MCF 10A (cell line): ENCODE measurements at regions of chr9 and their contacts with region 1.

Region 1: DNA sequence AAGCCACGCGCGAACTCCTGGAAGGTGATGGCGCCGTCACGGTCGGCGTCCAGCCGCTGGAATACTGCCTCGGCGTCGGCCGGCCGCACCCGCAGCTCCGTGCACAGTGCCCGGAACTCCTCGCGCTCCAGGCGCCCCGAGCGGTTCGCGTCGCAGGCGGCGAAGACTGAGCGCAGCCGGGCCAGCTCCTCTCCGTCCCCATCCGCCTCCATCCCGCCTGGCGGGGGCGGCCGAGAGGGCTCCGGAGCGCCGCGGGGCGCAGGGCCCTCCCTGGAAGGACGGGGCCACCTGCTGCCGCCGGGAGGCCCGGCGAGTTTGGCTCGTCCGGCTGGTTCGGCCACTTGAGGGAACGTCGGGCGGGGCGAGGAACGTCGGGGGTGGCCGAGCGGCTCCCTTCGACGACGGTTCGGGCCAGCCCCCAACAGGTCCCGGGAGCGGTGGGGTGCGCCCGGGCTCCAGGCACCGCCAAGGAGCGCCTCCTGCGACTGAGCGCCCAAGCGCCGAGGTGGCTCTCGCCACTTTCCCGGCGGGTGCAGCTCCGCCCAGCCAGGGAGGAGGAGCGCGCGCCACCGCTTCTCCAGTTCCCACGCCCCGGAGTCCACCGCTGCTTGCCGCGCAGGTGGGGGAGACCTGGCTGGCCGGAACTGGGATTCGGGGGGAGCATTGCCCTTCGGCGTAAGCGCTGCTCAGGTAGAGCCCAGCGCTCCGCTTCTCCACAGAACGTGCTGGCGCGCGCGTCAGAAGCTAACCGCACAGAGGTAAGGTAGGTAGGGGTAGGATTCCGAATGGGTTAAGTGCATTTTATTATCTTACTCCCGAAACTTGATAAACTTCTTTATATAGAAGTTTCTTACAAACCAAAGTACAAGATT is at the start of gene RASEF:
- DNase-seq: peak; percentile 65
- H3K4me3 Mint-ChIP-seq: peak within 1 kb of the TSS; percentile 94
- H3K27ac Mint-ChIP-seq: peak within 1 kb of the TSS; percentile 52
- H3K4me1 Mint-ChIP-seq: peaks cover 47% of the 10 kb centered on the region
- H3K27me3 Mint-ChIP-seq: no peaks in the 10 kb centered on the region
- CTCF ChIP-seq: peak; percentile 29
- total RNA-seq, gene RASEF: 6.9 and 7.5 TPM in 2 replicates

Region 2: DNA sequence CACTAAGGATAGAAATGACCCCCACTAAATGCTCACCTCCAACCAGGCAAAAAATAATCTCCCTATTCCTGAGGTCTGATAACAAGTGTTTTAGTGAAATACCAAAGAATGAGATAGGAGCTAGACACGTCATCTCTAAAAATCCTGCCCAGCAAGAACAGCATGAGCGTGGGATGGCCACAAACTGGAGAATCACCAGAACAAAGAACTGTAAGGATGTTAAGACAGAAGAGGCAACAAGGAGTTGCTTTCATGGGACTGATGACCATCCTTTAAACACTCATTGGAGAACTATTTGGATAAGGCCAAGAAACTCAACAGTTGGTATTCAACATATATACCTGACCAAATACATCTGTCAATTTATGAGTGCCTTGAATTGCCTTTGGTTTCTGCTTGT is 113.7 kb before region 1 on chr9:
- CTCF ChIA-PET with region 1: no interaction called
- POLR2A ChIA-PET with region 1: no interaction called
- intact Hi-C with region 1: no loop called
- DNase-seq: no peak
- H3K4me3 Mint-ChIP-seq: no peak overlapping the region
- H3K27ac Mint-ChIP-seq: no peak overlapping the region
- H3K4me1 Mint-ChIP-seq: no peaks in the 10 kb centered on the region
- H3K27me3 Mint-ChIP-seq: no peaks in the 10 kb centered on the region
- CTCF ChIP-seq: no peak

Region 3: GRCh38 chr9:82961504-82962125 is 101.3 kb before region 1 on chr9:
- CTCF ChIA-PET with region 1: no interaction called
- POLR2A ChIA-PET with region 1: no interaction called
- intact Hi-C with region 1: loop called (anchors 5 kb)
- DNase-seq: peak; percentile 90
- H3K4me3 Mint-ChIP-seq: no peak overlapping the region
- H3K27ac Mint-ChIP-seq: no peak overlapping the region
- H3K4me1 Mint-ChIP-seq: no peaks in the 10 kb centered on the region
- H3K27me3 Mint-ChIP-seq: no peaks in the 10 kb centered on the region
- CTCF ChIP-seq: peak; percentile 74

Region 4: GRCh38 chr9:83027153-83027891 is 35.6 kb before region 1 on chr9:
- CTCF ChIA-PET with region 1: interaction called, 5 read pairs
- POLR2A ChIA-PET with region 1: interaction called, 142 read pairs
- intact Hi-C with region 1: loop called (anchors 2 kb)
- DNase-seq: peak; percentile 84
- H3K4me3 Mint-ChIP-seq: no peak overlapping the region
- H3K27ac Mint-ChIP-seq: peak overlapping the region; percentile 83
- H3K4me1 Mint-ChIP-seq: peaks cover 45% of the 10 kb centered on the region
- H3K27me3 Mint-ChIP-seq: no peaks in the 10 kb centered on the region
- CTCF ChIP-seq: no peak

Region 5: GRCh38 chr9:83154087-83154736 is 91.3 kb after region 1 on chr9:
- CTCF ChIA-PET with region 1: no interaction called
- POLR2A ChIA-PET with region 1: interaction called, 4 read pairs
- intact Hi-C with region 1: loop called (anchors 10 kb)
- DNase-seq: peak; percentile 79
- H3K4me3 Mint-ChIP-seq: no peak overlapping the region
- H3K27ac Mint-ChIP-seq: peak overlapping the region; percentile 93
- H3K4me1 Mint-ChIP-seq: peaks cover 33% of the 10 kb centered on the region
- H3K27me3 Mint-ChIP-seq: no peaks in the 10 kb centered on the region
- CTCF ChIP-seq: no peak

Region 6: DNA sequence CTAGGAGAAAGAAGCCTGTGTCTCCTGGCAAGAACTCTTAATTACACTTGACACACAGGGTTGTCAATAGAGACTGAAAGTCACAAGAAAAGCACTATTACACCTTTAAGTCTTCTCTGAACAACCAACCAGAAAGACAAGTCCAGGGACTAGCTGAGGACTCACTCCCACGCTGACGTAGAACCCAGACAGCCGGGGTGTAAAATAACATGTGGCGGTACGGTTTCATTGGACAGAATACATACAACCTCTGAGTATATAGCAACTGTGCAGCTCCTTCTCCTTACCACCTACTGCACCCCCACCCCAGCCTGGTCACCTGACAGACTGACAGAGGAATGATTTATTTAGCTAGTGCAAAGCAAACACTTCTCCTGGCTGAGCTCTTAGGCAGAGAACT is 103.5 kb after region 1 on chr9:
- CTCF ChIA-PET with region 1: no interaction called
- POLR2A ChIA-PET with region 1: interaction called, 10 read pairs
- intact Hi-C with region 1: no loop called
- DNase-seq: peak; percentile 73
- H3K4me3 Mint-ChIP-seq: peak overlapping the region; percentile 7
- H3K27ac Mint-ChIP-seq: peak overlapping the region; percentile 75
- H3K4me1 Mint-ChIP-seq: peaks cover 27% of the 10 kb centered on the region
- H3K27me3 Mint-ChIP-seq: no peaks in the 10 kb centered on the region
- CTCF ChIP-seq: no peak